ENCODE measurements at regions of chrX and their contacts with region 1.

Region 1: GRCh38 chrX:48493890-48494364 is 14.9 kb upstream of the PORCN start:
- DNase-seq: no peak
- ATAC-seq: peak; percentile 43 to 57

Region 2: GRCh38 chrX:48083212-48083611 is 410.7 kb before region 1 on chrX:
- intact Hi-C with region 1: loop called in 1 of 2 experiments (anchors 10 kb)
- DNase-seq: peak; percentile 30
- ATAC-seq: peak; percentile 77 to 78

Region 3: DNA sequence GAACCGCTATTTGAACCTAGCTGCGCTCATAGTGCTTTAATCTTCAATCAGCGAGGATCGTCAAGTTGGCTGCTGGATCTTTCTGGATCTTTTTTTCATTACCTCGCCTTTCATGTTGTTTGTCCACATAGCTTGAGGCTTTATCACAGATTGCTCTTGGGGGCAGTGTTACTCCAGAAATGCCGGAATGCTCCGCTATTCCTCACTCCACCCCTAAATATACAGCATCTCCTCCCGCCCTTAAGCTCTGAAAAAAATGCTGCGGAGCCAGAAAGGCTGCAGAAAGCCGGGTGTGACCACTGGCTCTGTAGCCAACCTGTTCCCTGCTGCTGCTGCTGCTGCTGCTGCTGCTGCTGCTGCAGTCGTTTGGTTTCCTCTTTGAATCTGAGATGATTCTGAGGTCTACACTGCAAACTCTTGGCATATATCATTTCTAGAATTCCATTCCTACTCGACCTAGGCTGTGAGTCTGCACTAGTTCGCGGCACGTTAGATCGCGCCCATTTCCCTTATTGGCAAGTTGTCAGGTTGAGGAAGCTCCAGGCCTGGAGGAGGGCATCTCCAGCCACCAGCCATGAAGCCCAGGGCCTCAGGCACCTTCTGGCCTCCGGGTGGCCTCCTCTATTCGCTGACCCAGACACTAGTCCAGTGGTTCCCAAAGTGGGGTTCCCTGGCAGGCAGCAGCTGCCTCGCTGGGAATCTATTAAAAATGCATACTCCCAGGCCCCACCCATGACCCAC is 137.6 kb after region 1 on chrX:
- intact Hi-C with region 1: no loop called
- DNase-seq: peak; percentile 78
- ATAC-seq: peak; percentile 94 to 99